CD4-positive, alpha-beta T cell (primary cell): ENCODE measurements at regions of chr1 and their contacts with region 1.

Region 1: GRCh38 chr1:54996359-54996868 is 2.3 kb upstream of the BSND start:
- DNase-seq: peak; percentile 61 to 88 (median 70)
- ATAC-seq: peak; percentile 80
- H3K4me3 ChIP-seq: peak overlapping the region; percentile 29
- H3K4me3 Mint-ChIP-seq: peak overlapping the region; percentile 54
- H3K27ac ChIP-seq: no peak overlapping the region
- H3K27ac Mint-ChIP-seq: peak overlapping the region; percentile 52
- H3K4me1 ChIP-seq: peaks cover 21% of the 10 kb centered on the region
- H3K4me1 Mint-ChIP-seq: peaks cover 23% of the 10 kb centered on the region
- H3K27me3 ChIP-seq: peaks cover 29 to 35% of the 10 kb centered on the region in 2 experiments
- H3K27me3 Mint-ChIP-seq: peaks cover 47% of the 10 kb centered on the region
- CTCF ChIP-seq: peak; percentile 68

Region 2: DNA sequence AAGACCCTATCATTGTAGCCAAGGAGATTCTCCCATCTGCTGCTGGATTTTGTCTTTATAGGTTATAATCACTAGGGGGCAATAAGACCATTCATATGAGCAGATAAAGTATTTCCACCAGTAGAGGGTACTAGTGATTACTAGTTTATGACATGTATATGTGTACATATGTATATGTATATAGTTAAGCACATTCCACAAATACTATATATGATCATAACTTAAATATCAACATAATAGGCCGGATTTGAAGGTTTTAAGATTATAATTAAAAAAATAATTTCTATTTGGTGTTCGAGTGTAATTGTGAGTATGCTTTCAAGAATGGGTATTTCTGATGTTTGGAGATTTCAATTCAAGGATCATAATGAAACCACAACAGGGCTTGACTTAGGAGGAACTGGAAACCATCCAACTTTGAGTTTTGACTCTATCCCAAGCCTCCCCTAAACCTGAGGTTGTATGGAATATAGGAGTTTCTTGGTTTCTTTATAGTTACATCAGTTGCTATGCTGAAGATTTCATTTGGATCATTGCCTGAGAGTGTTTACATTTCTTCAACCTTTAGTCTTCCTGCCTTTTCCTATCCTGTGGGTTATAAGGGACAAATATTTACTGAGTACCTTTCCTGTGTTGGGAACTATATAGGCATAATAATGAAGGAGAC is 926.1 kb before region 1 on chr1:
- CTCF ChIA-PET with region 1: no interaction called
- POLR2A ChIA-PET with region 1: no interaction called
- intact Hi-C with region 1: loop called in 1 of 2 experiments (anchors 10 kb)
- DNase-seq: peak in 3 of 14 experiments; percentile 70 to 74 (median 72)
- ATAC-seq: peak; percentile 94
- H3K4me3 ChIP-seq: no peak overlapping the region
- H3K4me3 Mint-ChIP-seq: no peak overlapping the region
- H3K27ac ChIP-seq: no peak overlapping the region
- H3K27ac Mint-ChIP-seq: no peak overlapping the region
- H3K4me1 ChIP-seq: no peaks in the 10 kb centered on the region
- H3K4me1 Mint-ChIP-seq: no peaks in the 10 kb centered on the region
- H3K27me3 ChIP-seq: no peaks in the 10 kb centered on the region
- H3K27me3 Mint-ChIP-seq: no peaks in the 10 kb centered on the region
- CTCF ChIP-seq: peak; percentile 99

Region 3: DNA sequence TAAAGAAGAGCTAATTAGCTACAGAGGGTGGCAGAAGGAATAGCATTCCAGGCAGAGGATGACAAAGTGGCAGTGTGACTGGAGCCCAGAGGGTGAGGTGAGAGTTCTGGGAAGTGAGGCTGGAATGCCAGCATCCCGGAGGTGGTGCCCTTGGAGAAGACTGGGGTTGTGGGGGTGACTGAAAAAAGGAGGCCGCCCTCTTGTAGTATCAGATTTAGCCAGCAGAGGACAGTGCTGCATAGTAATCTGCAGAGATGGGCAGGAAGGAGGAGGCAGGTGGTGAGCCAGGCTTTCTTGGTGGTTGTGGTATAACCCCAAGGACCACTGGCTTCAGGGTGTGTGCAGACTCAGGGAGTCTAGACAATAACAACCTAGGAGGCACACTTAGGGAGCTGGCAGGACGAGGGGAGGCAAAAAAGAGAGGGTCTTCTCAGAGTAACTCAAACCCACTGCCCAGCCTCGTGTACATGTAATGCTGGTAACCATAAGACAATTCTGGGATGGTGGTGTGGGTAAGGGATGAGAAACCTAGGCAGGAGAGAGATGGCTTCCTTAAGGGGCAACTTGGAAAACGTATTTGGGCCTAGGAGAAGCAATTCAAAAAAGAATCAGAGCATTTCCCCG is 324.3 kb before region 1 on chr1:
- CTCF ChIA-PET with region 1: no interaction called
- POLR2A ChIA-PET with region 1: no interaction called
- intact Hi-C with region 1: loop called (anchors 2 to 5 kb)
- DNase-seq: peak; percentile 26 to 76 (median 52)
- ATAC-seq: peak; percentile 84
- H3K4me3 ChIP-seq: no peak overlapping the region
- H3K4me3 Mint-ChIP-seq: no peak overlapping the region
- H3K27ac ChIP-seq: no peak overlapping the region
- H3K27ac Mint-ChIP-seq: no peak overlapping the region
- H3K4me1 ChIP-seq: peaks cover 3% of the 10 kb centered on the region
- H3K4me1 Mint-ChIP-seq: no peaks in the 10 kb centered on the region
- H3K27me3 ChIP-seq: no peaks in the 10 kb centered on the region
- H3K27me3 Mint-ChIP-seq: no peaks in the 10 kb centered on the region
- CTCF ChIP-seq: peak; percentile 80

Region 4: GRCh38 chr1:54944610-54945544 is 51.5 kb before region 1 on chr1:
- CTCF ChIA-PET with region 1: interaction called, 20 read pairs
- POLR2A ChIA-PET with region 1: interaction called, 7 read pairs
- intact Hi-C with region 1: loop called (anchors 1 kb)
- DNase-seq: peak; percentile 21 to 82 (median 50)
- ATAC-seq: peak; percentile 49
- H3K4me3 ChIP-seq: no peak overlapping the region
- H3K4me3 Mint-ChIP-seq: no peak overlapping the region
- H3K27ac ChIP-seq: no peak overlapping the region
- H3K27ac Mint-ChIP-seq: no peak overlapping the region
- H3K4me1 ChIP-seq: peaks cover 6% of the 10 kb centered on the region
- H3K4me1 Mint-ChIP-seq: peaks cover 14% of the 10 kb centered on the region
- H3K27me3 ChIP-seq: no peaks in the 10 kb centered on the region
- H3K27me3 Mint-ChIP-seq: peaks cover 7% of the 10 kb centered on the region
- CTCF ChIP-seq: peak; percentile 77

Region 5: DNA sequence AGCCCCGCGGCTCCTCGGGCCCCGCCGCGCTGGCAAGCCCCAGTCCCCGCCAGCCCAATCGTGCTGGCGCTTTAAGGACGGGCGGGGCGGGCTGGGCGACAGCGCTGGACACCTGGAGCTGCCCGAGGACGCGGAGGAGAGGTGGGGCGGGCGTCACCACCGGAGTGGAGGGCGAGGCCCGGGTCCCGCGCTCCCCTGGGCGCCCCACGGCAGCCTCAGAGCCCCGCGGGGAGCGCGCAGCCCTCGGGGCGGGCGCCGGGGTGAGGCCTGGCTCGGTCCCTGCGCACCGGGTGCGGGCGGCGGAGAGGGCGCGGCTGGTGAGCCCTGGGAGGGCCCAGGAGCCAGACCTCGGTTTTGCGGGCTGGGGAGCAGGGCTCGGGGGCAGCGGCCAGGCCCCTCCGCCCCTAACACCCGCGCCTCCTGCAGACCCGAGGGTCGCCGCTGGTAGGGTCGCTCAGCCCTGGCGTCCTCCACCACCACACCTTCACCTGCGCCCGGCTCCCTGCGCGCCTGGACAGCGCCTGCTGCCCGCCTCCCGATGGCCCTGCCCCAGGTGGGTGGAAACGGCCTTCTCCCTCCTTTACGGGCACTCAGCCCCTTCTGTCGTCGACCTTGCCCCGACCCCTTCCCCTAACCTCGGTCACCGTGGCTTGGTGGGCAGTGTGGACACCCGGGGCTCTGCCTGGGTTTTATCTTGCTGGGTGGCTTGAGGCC is 15.7 kb before region 1 on chr1 and contains the start of gene TMEM61:
- CTCF ChIA-PET with region 1: no interaction called
- POLR2A ChIA-PET with region 1: no interaction called
- intact Hi-C with region 1: no loop called
- DNase-seq: no peak
- ATAC-seq: no peak
- H3K4me3 ChIP-seq: no peak within 1 kb of the TSS
- H3K4me3 Mint-ChIP-seq: no peak within 1 kb of the TSS
- H3K27ac ChIP-seq: no peak within 1 kb of the TSS
- H3K27ac Mint-ChIP-seq: no peak within 1 kb of the TSS
- H3K4me1 ChIP-seq: no peaks in the 10 kb centered on the region
- H3K4me1 Mint-ChIP-seq: no peaks in the 10 kb centered on the region
- H3K27me3 ChIP-seq: peaks cover 17 to 32% of the 10 kb centered on the region in 2 experiments
- H3K27me3 Mint-ChIP-seq: peaks cover 47% of the 10 kb centered on the region
- CTCF ChIP-seq: no peak
- total RNA-seq, gene TMEM61: not detected